CD4-positive, alpha-beta T cell (primary cell): ENCODE measurements at regions of chr6 and their contacts with region 1.

Region 1: GRCh38 chr6:26312501-26313390 is 52.3 kb upstream of the BTN3A2 start:
- DNase-seq: peak; percentile 73 to 92 (median 82)
- ATAC-seq: peak; percentile 54
- H3K4me3 ChIP-seq: peak overlapping the region; percentile 69
- H3K4me3 Mint-ChIP-seq: peak overlapping the region; percentile 92
- H3K27ac ChIP-seq: peak overlapping the region in 1 of 2 donors; percentile 24
- H3K27ac Mint-ChIP-seq: peak overlapping the region; percentile 93
- H3K4me1 ChIP-seq: peaks cover 7% of the 10 kb centered on the region
- H3K4me1 Mint-ChIP-seq: peaks cover 44% of the 10 kb centered on the region
- H3K27me3 ChIP-seq: no peaks in the 10 kb centered on the region
- H3K27me3 Mint-ChIP-seq: peaks cover 30% of the 10 kb centered on the region
- CTCF ChIP-seq: no peak

Region 2: DNA sequence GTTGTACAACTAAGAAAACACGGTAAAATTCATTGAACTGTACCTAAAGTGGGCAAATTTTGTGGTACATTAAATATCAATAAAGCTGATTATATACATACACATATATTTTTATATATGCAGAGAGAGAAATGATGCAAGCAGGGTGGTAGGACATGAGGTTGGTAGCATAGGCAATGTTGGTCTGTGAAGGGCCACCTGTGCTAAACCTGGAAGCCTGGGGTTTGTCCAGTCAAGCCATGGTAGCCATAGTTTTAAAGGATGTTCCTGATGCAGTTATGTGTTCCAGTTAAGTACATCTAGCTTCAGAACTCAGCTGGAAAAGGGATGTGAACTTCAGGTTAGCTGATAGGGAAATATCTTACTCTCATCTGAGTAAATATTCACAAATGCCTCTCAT is 290.0 kb before region 1 on chr6:
- CTCF ChIA-PET with region 1: no interaction called
- POLR2A ChIA-PET with region 1: no interaction called
- intact Hi-C with region 1: no loop called
- DNase-seq: no peak
- ATAC-seq: no peak
- H3K4me3 ChIP-seq: no peak overlapping the region
- H3K4me3 Mint-ChIP-seq: peak overlapping the region; percentile 95
- H3K27ac ChIP-seq: no peak overlapping the region
- H3K27ac Mint-ChIP-seq: peak overlapping the region; percentile 97
- H3K4me1 ChIP-seq: peaks cover 44% of the 10 kb centered on the region
- H3K4me1 Mint-ChIP-seq: peaks cover 53% of the 10 kb centered on the region
- H3K27me3 ChIP-seq: no peaks in the 10 kb centered on the region
- H3K27me3 Mint-ChIP-seq: no peaks in the 10 kb centered on the region
- CTCF ChIP-seq: no peak

Region 3: DNA sequence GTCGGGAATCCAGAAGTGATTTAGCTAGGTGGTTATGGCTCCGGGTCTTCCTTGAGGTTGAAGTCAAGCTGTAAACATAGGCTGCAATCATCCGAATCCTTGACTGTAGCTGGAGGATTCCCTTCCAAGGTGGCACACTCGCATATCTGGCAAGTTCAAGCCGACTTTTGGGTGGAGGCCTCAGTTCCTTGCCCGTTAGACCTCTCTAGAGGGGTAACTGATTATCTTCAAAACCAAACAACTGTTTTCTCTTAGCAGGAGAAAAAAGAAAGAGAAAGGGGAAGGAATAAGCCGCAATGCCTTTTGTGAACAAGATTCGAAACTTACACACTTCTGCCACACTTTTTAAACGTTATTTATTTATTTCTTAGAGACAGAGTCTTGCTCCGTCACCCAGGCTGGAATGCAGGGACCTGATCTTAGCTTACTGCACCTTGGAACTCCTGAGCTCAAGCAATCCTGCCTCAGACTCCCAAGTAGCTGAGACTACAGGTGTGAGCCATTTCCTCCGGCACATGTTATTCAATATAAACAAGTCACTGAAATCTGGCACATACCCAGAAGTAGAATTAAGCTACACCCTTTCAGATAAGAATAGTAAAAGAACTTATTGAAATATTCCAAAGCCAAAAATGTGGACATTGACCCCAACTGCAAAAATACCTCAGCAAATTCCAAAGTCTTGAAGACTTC is 149.2 kb before region 1 on chr6:
- CTCF ChIA-PET with region 1: no interaction called
- POLR2A ChIA-PET with region 1: no interaction called
- intact Hi-C with region 1: no loop called
- DNase-seq: no peak
- ATAC-seq: no peak
- H3K4me3 ChIP-seq: no peak overlapping the region
- H3K4me3 Mint-ChIP-seq: peak overlapping the region; percentile 75
- H3K27ac ChIP-seq: no peak overlapping the region
- H3K27ac Mint-ChIP-seq: peak overlapping the region; percentile 80
- H3K4me1 ChIP-seq: peaks cover 57% of the 10 kb centered on the region
- H3K4me1 Mint-ChIP-seq: peaks cover 47% of the 10 kb centered on the region
- H3K27me3 ChIP-seq: no peaks in the 10 kb centered on the region
- H3K27me3 Mint-ChIP-seq: no peaks in the 10 kb centered on the region
- CTCF ChIP-seq: no peak

Region 4: GRCh38 chr6:26240154-26241032 is 72.4 kb before region 1 on chr6:
- CTCF ChIA-PET with region 1: no interaction called
- POLR2A ChIA-PET with region 1: no interaction called
- intact Hi-C with region 1: loop called in 1 of 2 experiments (anchors 2 kb)
- DNase-seq: peak; percentile 45 to 96 (median 64)
- ATAC-seq: peak; percentile 76
- H3K4me3 ChIP-seq: peak overlapping the region; percentile 66
- H3K4me3 Mint-ChIP-seq: peak overlapping the region; percentile 84
- H3K27ac ChIP-seq: peak overlapping the region; percentile 78 to 90
- H3K27ac Mint-ChIP-seq: peak overlapping the region; percentile 96
- H3K4me1 ChIP-seq: peaks cover 17% of the 10 kb centered on the region
- H3K4me1 Mint-ChIP-seq: peaks cover 23% of the 10 kb centered on the region
- H3K27me3 ChIP-seq: no peaks in the 10 kb centered on the region
- H3K27me3 Mint-ChIP-seq: no peaks in the 10 kb centered on the region
- CTCF ChIP-seq: no peak

Region 5: GRCh38 chr6:26249957-26250697 is 62.6 kb before region 1 on chr6:
- CTCF ChIA-PET with region 1: interaction called, 3 read pairs
- POLR2A ChIA-PET with region 1: interaction called, 19 read pairs
- intact Hi-C with region 1: no loop called
- DNase-seq: peak; percentile 64 to 93 (median 74)
- ATAC-seq: peak; percentile 78
- H3K4me3 ChIP-seq: peak overlapping the region; percentile 75
- H3K4me3 Mint-ChIP-seq: peak overlapping the region; percentile 97
- H3K27ac ChIP-seq: peak overlapping the region; percentile 72 to 80
- H3K27ac Mint-ChIP-seq: peak overlapping the region; percentile 88
- H3K4me1 ChIP-seq: peaks cover 29% of the 10 kb centered on the region
- H3K4me1 Mint-ChIP-seq: peaks cover 44% of the 10 kb centered on the region
- H3K27me3 ChIP-seq: no peaks in the 10 kb centered on the region
- H3K27me3 Mint-ChIP-seq: no peaks in the 10 kb centered on the region
- CTCF ChIP-seq: no peak

Region 6: DNA sequence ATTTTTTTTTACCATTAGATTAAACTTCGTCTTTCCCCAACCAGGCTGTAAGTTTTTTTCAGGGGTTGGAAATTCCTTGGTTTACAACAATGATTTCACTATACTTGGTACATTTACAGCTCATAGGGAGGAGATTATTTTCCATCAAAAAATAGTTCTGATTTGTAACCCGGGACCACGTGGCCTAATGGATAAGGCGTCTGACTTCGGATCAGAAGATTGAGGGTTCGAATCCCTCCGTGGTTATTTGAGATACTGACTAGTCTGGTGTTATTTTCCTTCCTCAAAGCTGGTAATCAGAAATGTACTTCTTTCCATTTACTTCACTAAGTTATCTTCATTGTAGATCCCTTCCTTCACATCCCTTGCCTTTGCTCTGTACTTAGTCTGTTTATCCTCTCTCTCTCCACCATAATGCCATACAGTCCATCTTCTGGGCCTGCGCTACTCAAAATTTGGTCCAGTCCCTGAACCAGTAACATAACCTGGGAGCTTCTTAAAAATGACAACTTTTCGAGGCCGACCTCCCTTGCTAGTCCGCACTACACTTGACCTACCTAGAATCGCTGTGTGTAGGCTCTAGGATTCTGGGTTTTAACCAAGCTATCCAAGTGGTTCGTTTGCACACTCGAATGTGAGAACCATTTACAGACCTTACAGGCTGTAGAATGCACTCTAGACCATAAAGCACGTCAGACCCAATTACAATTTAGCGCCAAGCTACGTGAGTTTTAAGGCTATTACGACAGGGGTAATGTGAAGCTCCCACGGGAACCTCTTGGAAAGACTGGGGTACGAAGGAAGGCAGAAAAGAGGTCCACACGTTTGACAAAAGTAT is 10.1 kb after region 1 on chr6:
- CTCF ChIA-PET with region 1: interaction called, 4 read pairs
- POLR2A ChIA-PET with region 1: interaction called, 27 read pairs
- intact Hi-C with region 1: loop called in 1 of 2 experiments (anchors 1 kb)
- DNase-seq: peak in 10 of 14 experiments; percentile 20 to 88 (median 52)
- ATAC-seq: peak; percentile 75
- H3K4me3 ChIP-seq: peak overlapping the region; percentile 54
- H3K4me3 Mint-ChIP-seq: peak overlapping the region; percentile 96
- H3K27ac ChIP-seq: no peak overlapping the region
- H3K27ac Mint-ChIP-seq: peak overlapping the region; percentile 93
- H3K4me1 ChIP-seq: peaks cover 23% of the 10 kb centered on the region
- H3K4me1 Mint-ChIP-seq: peaks cover 30% of the 10 kb centered on the region
- H3K27me3 ChIP-seq: no peaks in the 10 kb centered on the region
- H3K27me3 Mint-ChIP-seq: peaks cover 35% of the 10 kb centered on the region
- CTCF ChIP-seq: no peak

Region 7: DNA sequence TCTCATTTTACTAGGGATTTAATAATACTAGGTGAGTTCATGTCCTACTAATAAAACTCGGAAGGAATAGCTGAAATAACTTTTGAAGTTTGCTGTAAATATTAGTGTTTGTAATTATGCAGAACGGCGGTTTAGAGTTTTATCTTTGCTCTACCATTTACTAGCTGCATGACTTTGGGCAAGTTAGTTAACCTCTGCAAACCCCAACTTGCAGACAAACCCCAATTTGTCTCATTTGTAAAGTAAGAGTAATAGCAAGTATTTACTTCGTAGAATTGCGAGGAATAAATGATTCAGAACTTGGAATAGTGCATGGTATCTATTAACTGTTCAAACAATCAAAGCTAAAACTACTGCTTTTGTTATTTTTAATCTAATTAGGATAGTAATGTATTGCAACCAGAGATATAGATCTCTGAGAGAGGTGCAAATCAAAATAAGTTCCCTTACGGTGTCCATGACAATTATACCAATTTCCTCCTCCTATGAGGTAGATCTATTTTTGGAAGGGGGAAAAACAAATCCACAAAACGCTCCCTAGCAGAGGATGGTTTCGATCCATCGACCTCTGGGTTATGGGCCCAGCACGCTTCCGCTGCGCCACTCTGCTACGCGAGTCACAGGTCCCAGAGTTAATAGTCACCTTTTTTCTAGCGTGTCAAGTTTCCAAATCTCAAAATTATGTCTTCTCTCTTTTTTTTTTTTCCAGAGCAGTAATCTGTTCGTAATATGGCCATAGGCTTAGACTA is 17.2 kb after region 1 on chr6:
- CTCF ChIA-PET with region 1: interaction called, 3 read pairs
- POLR2A ChIA-PET with region 1: interaction called, 10 read pairs
- intact Hi-C with region 1: loop called in 1 of 2 experiments (anchors 1 kb)
- DNase-seq: peak in 13 of 14 experiments; percentile 23 to 84 (median 47)
- ATAC-seq: peak; percentile 21
- H3K4me3 ChIP-seq: no peak overlapping the region
- H3K4me3 Mint-ChIP-seq: peak overlapping the region; percentile 88
- H3K27ac ChIP-seq: no peak overlapping the region
- H3K27ac Mint-ChIP-seq: peak overlapping the region; percentile 92
- H3K4me1 ChIP-seq: peaks cover 27% of the 10 kb centered on the region
- H3K4me1 Mint-ChIP-seq: peaks cover 61% of the 10 kb centered on the region
- H3K27me3 ChIP-seq: peaks cover 23% of the 10 kb centered on the region in 2 experiments
- H3K27me3 Mint-ChIP-seq: peaks cover 41% of the 10 kb centered on the region
- CTCF ChIP-seq: no peak

Region 8: DNA sequence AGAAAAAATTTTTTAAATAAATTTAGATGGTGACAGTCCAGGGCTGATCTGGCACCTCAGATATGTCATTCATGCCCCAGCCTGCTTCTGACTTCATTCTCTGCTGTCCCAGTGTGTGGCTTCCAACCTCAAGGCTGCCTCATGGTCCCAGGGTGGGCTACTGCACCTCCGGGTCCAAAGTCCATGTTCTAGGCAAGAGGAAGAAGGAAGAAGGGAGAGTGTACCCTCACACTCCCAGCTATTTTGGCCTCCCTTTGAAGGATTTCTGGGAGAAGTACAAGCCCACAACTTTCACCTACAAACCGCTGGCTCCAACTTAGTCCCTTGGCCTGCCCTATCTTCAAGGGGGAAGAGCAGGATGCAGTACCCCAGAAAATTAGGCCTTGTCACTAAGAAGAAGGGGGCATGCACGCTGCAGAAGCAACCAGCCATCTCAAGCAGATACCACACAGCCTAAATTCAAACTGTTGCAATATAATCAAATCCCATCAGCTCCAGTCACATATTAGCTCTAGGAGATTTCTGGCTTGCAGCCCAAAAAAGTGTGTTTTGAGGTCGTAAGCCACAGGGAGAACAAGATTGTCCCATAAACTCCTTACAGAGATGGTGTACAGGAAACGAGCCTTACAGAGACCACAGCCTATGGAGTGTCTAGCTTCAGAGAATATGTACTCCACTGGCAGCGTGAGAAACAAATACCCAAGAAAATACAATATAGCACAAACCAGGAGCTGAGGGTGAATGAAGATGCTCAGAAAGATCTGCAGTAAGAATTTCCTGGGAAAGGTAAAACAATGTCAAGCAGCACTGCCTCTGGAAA is 51.3 kb after region 1 on chr6:
- CTCF ChIA-PET with region 1: no interaction called
- POLR2A ChIA-PET with region 1: no interaction called
- intact Hi-C with region 1: no loop called
- DNase-seq: peak in 5 of 14 experiments; percentile 4 to 64 (median 47)
- ATAC-seq: peak; percentile 21
- H3K4me3 ChIP-seq: peak overlapping the region; percentile 91
- H3K4me3 Mint-ChIP-seq: no peak overlapping the region
- H3K27ac ChIP-seq: peak overlapping the region; percentile 93 to 94
- H3K27ac Mint-ChIP-seq: no peak overlapping the region
- H3K4me1 ChIP-seq: peaks cover 40% of the 10 kb centered on the region
- H3K4me1 Mint-ChIP-seq: peaks cover 53% of the 10 kb centered on the region
- H3K27me3 ChIP-seq: no peaks in the 10 kb centered on the region
- H3K27me3 Mint-ChIP-seq: no peaks in the 10 kb centered on the region
- CTCF ChIP-seq: no peak

Region 9: DNA sequence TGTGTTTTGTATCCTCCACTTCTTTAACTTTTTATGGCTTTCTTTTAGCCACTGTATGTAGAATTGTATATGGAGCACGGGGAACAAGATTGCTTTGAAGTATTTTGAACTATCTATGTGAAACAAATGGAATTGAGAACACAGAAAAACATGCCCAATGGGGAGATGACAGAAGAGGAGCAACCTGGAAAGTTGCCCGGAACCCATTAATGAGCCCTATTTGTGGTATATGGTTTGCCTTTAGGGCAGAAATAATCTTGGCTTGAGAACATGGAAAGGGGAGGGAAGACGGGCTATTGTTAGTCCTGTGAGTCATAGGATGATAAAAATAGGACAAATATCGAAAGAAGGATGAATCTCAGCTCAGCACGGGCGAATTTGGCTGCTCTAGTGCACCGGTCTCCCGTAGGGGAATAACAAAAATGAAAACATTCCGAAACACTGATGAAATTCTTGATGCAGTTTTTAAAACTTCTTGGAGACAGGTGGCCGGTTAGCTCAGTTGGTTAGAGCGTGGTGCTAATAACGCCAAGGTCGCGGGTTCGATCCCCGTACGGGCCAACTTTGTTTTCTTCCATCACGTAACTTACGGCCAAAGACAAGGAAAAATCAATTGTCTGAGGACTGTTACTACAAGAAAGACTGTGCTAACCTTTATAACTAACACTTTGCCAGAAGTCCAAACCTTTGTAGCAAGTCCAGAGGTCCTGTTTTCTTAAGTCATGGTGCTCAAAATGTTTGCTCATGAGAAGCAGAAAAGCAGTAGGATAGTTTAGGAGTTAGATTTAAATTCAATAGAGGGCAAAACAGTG is 241.1 kb after region 1 on chr6:
- CTCF ChIA-PET with region 1: no interaction called
- POLR2A ChIA-PET with region 1: no interaction called
- intact Hi-C with region 1: loop called in 1 of 2 experiments (anchors 5 kb)
- DNase-seq: peak; percentile 51 to 91 (median 64)
- ATAC-seq: peak; percentile 30
- H3K4me3 ChIP-seq: peak overlapping the region; percentile 60
- H3K4me3 Mint-ChIP-seq: no peak overlapping the region
- H3K27ac ChIP-seq: no peak overlapping the region
- H3K27ac Mint-ChIP-seq: no peak overlapping the region
- H3K4me1 ChIP-seq: peaks cover 33% of the 10 kb centered on the region
- H3K4me1 Mint-ChIP-seq: peaks cover 25% of the 10 kb centered on the region
- H3K27me3 ChIP-seq: no peaks in the 10 kb centered on the region
- H3K27me3 Mint-ChIP-seq: peaks cover 8% of the 10 kb centered on the region
- CTCF ChIP-seq: no peak

Region 10: DNA sequence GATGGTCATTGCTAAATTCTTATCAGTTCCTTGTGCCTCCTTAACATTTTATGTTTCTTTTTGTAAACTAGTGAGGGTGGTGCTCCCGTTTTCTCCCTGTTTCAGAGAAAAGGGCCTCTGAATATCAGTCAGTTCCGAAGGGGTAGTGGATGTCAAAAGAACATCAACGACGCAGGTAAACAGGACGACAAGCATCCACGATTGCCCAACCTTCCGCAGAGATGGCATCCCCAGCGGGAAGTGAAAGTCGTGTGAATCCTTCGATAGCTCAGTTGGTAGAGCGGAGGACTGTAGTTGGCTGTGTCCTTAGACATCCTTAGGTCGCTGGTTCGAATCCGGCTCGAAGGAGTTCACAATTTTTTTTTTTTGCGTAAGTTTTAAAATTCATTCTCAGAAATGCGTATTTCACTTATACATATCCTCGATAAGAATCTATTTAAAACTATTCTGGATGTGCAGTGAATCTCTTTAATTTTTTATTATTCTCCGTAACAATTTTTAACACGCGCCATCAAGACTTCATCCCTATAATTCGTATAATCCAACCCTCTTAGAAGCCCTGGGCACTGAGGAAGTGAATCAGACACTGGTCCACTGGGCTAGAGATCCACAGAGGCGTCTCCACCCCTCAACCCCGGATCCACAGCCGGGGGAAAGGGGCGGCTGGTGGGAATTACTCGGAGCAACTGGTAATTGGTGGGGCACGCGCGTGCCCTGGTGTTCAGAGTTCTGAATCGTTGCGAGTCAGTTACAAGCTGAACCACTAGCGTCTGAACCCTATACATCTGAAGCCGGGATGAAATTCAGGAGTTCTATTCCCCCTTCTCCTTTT is 256.1 kb after region 1 on chr6:
- CTCF ChIA-PET with region 1: no interaction called
- POLR2A ChIA-PET with region 1: interaction called, 3 read pairs
- intact Hi-C with region 1: loop called in 1 of 2 experiments (anchors 2 kb)
- DNase-seq: peak; percentile 96 to 100 (median 98)
- ATAC-seq: peak; percentile 74
- H3K4me3 ChIP-seq: peak overlapping the region; percentile 55
- H3K4me3 Mint-ChIP-seq: peak overlapping the region; percentile 97
- H3K27ac ChIP-seq: peak overlapping the region; percentile 37 to 53
- H3K27ac Mint-ChIP-seq: peak overlapping the region; percentile 100
- H3K4me1 ChIP-seq: peaks cover 21% of the 10 kb centered on the region
- H3K4me1 Mint-ChIP-seq: peaks cover 29% of the 10 kb centered on the region
- H3K27me3 ChIP-seq: no peaks in the 10 kb centered on the region
- H3K27me3 Mint-ChIP-seq: peaks cover 16% of the 10 kb centered on the region
- CTCF ChIP-seq: peak; percentile 58